ENCODE measurements at regions of chr10 and their contacts with region 1.

Region 1: DNA sequence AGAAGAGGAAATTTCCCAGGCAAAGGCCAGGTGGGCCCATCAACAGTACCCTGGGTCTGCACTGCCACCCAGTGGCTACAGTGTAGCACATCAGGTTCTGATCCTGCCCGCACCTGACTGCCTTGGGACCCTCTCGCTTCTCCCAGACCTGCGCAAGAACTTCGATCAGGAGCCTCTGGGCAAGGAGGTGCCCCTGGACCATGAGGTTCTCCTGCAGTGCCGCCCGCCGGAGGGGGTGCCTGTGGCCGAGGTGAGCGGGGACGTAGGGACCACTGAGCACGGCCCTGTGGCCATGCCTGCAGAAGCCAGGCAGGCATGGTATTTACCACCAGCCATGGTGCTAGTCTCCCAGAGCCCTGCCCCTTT is 33.9 kb upstream of the SLC29A3 start:
- DNase-seq: peak in 3 of 6 donors; percentile 47 to 71 (median 51)
- ATAC-seq: peak; percentile 58 to 92 (median 87)
- H3K4me3 ChIP-seq: no peak overlapping the region
- H3K27ac ChIP-seq: no peak overlapping the region
- H3K4me1 ChIP-seq: no peaks in the 10 kb centered on the region
- H3K27me3 ChIP-seq: no peaks in the 10 kb centered on the region
- CTCF ChIP-seq: peak; percentile 45 to 61 (median 54)

Region 2: DNA sequence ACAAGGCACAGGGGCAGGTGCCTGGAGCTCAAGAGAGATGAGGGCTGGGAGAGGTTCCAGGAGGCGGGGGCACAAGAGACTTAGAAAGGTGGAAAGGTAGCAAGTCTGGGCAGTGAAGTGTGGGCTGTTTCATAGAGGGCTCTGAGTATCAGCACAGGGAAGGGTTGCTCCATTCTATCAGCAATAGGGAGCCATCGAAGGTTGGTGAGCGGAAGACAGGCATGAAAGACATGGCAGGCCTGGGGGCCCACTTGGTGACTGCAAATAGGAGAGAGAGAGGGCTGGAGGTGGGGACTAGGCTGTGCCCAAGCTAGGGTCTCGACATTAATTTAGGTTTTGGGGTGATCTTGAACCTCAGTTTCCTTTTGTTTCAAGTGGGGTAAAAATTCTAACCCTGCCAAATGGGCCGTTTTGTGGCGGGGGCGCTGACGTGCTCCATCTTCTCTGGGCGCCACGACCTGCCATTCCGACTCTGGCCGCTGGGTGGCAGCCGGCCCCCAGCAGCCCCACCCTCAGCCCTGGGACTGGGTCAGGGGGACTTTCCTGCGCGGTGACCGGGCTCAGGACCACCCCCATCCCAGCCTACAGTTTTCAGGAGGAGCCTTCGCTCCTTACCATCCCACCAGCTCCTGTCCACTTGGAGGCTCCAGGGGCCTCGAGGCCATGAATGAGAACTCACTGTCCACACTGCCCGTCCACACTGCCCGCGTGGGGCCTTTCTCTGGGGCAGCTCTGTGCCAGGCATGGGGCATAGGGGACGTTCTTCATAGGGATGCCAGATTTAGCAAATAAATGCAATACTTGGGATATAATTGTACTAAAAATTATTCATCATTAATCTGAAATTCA is 359.6 kb before region 1 on chr10:
- intact Hi-C with region 1: loop called in 2 of 3 experiments (anchors 5 kb)
- DNase-seq: peak in 4 of 6 donors; percentile 50 to 86 (median 62)
- ATAC-seq: peak; percentile 70 to 95 (median 86)
- H3K4me3 ChIP-seq: no peak overlapping the region
- H3K27ac ChIP-seq: no peak overlapping the region
- H3K4me1 ChIP-seq: no peaks in the 10 kb centered on the region
- H3K27me3 ChIP-seq: no peaks in the 10 kb centered on the region
- CTCF ChIP-seq: peak; percentile 89 to 93 (median 91)

Measured in pancreas (tissue), 10 donors.